Posterior cingulate gyrus (tissue), 11 donors: ENCODE measurements at regions of chr11 and their contacts with region 1.

Region 1: DNA sequence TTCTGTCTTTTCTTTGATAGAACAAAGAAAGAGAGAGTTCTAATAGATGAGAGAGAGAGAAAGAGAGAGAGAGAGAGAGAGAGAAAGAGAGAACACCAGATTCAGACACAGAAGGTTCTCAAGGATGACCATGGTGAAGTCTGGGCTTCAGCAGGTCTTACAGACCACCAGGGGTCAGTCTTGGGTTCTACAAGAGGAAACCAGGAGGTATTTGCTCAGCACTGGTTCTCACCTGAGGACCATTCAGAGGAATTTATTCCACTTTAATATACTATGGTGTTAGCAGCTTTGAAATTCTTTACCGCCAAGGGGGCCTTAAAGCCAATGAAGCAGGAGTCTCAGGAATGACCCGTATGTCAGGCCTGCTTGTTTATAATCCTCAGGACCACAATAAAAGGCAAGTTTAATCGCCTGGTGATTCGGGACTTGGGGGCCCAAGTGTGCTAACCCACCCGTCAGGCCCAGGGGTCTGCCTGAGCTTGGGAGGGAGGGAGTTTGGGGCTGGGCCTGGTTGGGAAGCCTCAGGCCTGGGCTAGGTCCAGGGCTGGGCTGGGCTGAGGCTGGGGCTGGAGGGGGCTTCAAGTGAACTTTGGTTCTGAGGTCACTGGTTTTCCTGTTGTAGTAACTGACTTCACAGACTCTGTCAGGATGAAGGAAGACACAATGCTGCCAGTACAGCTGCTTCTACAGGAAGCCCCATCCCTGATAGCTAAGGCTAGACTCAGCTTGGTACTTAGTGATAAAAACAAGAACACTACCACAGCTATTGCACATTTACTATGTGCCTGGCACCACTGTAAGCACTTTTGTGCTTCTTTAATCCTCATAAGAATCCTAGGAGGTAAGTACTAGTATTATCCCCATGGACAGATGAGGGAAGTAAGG is 179.2 kb upstream of the ZBED5 start:
- DNase-seq: peak in 2 of 10 donors; percentile 30 to 31

Region 2: GRCh38 chr11:11621573-11622319 is 584.7 kb after region 1 on chr11 and contains the start of gene GALNT18:
- intact Hi-C with region 1: loop called (anchors 5 kb)
- DNase-seq: peak; percentile 80 to 99 (median 92)